Head of caudate nucleus (tissue), 42 donors: ENCODE measurements at regions of chr2 and their contacts with region 1.

Region 1: DNA sequence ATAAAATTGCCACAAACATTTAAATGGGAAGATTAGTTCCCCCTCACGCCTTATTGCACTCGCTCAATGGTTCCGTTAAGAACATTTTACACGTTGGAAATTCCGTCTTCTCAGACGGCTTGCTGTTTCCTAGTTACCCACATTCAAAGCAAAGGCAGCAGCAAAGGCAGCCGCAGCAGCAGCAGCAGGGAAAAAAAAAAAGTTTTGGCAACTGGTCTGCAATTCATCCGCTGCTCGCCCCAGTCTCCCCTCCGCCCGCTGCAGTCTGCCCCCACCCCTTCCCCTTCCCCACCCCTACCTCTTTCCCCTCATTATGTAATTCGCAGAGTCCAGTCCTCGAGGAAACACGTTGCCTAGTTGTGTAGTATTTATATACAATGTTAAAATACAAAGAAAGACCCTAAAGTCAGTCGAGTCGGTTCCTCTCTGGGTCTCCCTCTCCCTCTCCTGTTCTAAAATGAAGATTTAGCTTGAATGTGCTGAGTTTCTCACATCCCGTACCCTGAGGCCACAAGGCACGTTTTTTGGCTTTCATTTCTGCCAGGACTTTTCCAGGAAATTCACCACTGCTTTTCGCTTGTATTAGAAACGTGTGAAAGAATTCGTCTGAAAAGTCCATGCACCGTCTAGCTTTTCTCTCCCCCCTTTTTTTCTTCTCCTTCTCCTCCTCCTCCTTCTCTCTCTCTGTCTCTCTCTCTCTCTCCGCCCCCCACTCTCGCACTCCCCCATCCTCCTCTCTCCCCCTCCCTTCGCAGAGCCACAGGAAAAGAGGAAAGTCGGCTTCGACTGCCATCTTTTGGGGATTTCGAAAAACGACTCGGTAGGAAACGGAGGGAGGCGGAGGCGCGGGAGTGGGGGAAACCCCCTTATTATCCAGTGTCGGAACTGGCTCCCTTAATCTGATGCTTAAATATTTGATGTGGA is 140.0 kb downstream of the MEIS1 start:
- DNase-seq: peak; percentile 57 to 92 (median 79)

Region 2: GRCh38 chr2:66030553-66030952 is 544.4 kb before region 1 on chr2:
- intact Hi-C with region 1: no loop called
- DNase-seq: no peak

Region 3: GRCh38 chr2:66432801-66433769 is 141.9 kb before region 1 on chr2:
- intact Hi-C with region 1: loop called (anchors 2 kb)
- DNase-seq: peak; percentile 88 to 98 (median 94)